Activated B cell treated with CpG ODN at 0.5 μM for 24 hours (primary cell): ENCODE measurements at regions of chr14 and their contacts with region 1.

Region 1: DNA sequence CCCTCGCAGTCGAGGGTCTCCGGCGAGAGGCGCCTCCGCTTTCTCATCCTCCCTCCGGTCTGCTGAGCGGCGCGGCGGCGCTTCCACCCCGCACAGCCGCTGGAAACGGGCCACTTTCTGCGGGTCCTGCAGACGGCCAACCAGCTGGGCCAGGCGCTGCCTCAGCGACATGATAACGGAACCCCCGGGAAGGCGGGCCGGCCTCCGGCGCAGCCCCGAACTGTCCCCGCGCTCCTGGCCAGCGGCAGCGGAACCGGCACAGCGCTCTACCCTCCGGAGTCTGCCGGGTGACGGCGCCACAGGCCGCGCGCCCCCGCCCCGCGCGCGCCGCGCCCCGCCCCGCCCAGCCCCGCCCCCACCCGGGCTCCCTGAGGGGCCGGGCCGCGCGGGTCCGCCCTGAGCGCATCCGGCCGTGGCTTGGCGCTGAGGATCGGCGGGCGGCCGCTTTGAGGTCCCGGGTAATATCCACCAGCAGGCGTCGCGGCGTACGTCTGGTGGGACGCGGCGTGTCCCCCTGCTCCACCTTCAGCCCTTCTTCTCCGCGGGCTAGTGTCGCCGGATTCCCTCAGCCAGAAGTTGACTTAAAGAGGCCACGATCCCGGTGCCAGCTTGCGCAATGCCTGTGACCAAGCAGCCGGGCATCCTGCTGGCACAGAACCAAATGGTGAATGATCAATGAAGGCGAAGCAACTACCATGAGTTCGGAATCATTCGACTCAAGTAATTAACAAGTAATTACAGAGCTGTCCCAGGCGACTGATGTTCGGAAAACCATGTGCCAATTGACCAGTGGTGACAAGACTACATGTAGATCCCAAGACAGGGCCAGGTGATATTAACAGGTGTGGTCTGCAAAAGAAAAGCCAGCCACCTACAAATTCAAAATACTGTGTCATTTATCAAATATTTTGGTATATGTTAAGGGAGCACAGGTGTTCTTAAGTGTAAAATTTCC is at the start of gene SGPP1:
- DNase-seq: peak; percentile 82
- ATAC-seq: peak; percentile 91
- H3K4me3 Mint-ChIP-seq: peak within 1 kb of the TSS; percentile 99
- H3K27ac Mint-ChIP-seq: peak within 1 kb of the TSS; percentile 96
- H3K4me1 Mint-ChIP-seq: peaks cover 42% of the 10 kb centered on the region
- H3K27me3 Mint-ChIP-seq: no peaks in the 10 kb centered on the region
- CTCF ChIP-seq: no peak
- total RNA-seq, gene SGPP1: 20.9 and 21.2 TPM in 2 replicates

Region 2: GRCh38 chr14:63692310-63693020 is 35.6 kb before region 1 on chr14:
- CTCF ChIA-PET with region 1: no interaction called
- POLR2A ChIA-PET with region 1: interaction called, 3 read pairs
- intact Hi-C with region 1: loop called (anchors 5 kb)
- DNase-seq: no peak
- ATAC-seq: no peak
- H3K4me3 Mint-ChIP-seq: no peak overlapping the region
- H3K27ac Mint-ChIP-seq: peak overlapping the region; percentile 56
- H3K4me1 Mint-ChIP-seq: peaks cover 12% of the 10 kb centered on the region
- H3K27me3 Mint-ChIP-seq: no peaks in the 10 kb centered on the region
- CTCF ChIP-seq: no peak

Region 3: GRCh38 chr14:63705561-63706070 is 22.4 kb before region 1 on chr14:
- CTCF ChIA-PET with region 1: interaction called, 4 read pairs
- POLR2A ChIA-PET with region 1: interaction called, 12 read pairs
- intact Hi-C with region 1: loop called (anchors 1 kb)
- DNase-seq: no peak
- ATAC-seq: peak; percentile 75
- H3K4me3 Mint-ChIP-seq: peak overlapping the region; percentile 52
- H3K27ac Mint-ChIP-seq: peak overlapping the region; percentile 83
- H3K4me1 Mint-ChIP-seq: peaks cover 80% of the 10 kb centered on the region
- H3K27me3 Mint-ChIP-seq: no peaks in the 10 kb centered on the region
- CTCF ChIP-seq: no peak

Region 4: DNA sequence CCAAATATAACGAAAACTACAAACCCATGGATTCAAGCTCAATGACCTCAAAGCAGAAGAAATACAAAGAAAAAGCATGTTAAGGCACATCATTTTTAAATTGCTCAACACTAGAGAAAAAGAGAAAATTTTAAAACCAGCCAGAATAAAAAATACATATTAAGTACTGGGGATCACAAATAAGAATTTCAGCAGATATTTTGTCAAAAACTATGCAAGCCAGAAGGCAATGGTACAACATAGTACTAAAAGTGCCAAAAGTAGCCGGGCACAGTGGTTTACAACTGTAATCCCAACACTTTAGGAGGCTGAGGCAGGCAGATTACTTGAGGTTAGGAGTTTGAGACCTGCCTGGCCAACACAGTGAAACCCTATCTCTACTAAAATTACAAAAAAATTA is 10.3 kb before region 1 on chr14:
- CTCF ChIA-PET with region 1: no interaction called
- POLR2A ChIA-PET with region 1: interaction called, 12 read pairs
- intact Hi-C with region 1: loop called (anchors 1 kb)
- DNase-seq: no peak
- ATAC-seq: no peak
- H3K4me3 Mint-ChIP-seq: no peak overlapping the region
- H3K27ac Mint-ChIP-seq: no peak overlapping the region
- H3K4me1 Mint-ChIP-seq: peaks cover 22% of the 10 kb centered on the region
- H3K27me3 Mint-ChIP-seq: no peaks in the 10 kb centered on the region
- CTCF ChIP-seq: no peak

Region 5: DNA sequence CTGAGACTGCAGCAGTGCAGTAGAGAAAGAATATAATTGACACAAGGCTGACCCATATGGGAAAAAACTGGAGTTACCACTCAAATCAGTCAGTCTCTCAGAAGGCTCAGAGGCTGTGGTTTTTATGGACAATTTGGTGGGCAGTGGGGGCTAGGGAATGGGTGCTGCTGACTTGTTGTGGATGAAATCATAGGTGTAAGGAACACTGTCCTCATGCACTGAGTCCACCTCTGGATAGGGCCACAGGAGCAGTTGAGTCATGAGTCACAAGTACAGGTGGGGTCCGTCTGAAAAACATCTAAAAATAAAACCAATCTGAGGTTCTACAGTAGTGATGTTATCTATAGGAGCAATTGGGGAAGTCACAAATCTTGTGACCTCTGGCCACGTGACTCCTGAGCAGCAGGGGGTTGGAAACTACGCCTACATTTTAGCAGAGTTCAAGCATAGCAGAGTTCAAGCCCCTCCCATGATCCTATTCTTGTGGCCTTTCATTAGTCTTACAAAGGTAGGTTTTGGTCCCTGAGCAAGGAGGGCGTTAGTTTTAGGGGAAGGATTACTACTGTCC is 17.9 kb after region 1 on chr14:
- CTCF ChIA-PET with region 1: no interaction called
- POLR2A ChIA-PET with region 1: interaction called, 5 read pairs
- intact Hi-C with region 1: loop called (anchors 1 kb)
- DNase-seq: peak; percentile 36
- ATAC-seq: peak; percentile 75
- H3K4me3 Mint-ChIP-seq: peak overlapping the region; percentile 63
- H3K27ac Mint-ChIP-seq: peak overlapping the region; percentile 96
- H3K4me1 Mint-ChIP-seq: peaks cover 47% of the 10 kb centered on the region
- H3K27me3 Mint-ChIP-seq: no peaks in the 10 kb centered on the region
- CTCF ChIP-seq: no peak